Left colon (tissue), 2 donors: ENCODE measurements at regions of chr4 and their contacts with region 1.

Region 1: DNA sequence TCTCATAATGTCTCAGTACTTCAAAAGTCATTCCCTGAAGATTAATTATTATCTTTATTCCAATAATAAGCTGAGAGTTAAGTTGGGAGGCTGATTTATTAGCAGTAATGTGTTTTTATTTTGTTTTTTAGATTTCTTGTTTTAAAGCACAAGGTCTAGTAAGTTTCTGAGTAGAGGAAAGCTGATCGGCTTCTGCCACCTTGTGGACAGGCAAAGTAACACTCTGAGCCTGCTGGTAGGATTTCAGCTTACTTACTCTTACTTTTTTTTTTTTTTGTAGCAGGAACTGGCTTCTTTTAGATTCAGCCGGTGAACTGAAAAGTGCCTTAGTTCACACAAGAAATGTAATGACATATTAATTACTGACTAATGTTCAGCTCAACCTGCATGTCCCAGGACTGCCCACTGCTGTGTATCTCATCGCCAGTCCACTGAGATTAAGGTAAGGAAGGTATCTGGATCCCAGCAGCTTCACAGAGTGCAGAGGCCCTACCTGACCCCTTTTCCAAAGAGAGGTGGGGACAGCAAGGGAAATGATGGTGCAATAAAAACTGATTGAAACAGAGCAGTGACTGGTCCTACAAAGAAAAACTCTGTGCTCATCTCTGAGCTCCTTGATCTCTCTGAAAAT is 126.5 kb downstream of the ADGRA3 start:
- DNase-seq: peak; percentile 27 to 32
- ATAC-seq: peak; percentile 80

Region 2: GRCh38 chr4:21790438-21791029 is 598.8 kb before region 1 on chr4:
- intact Hi-C with region 1: loop called in 1 of 2 experiments (anchors 5 kb)
- DNase-seq: no peak
- ATAC-seq: peak; percentile 34

Region 3: GRCh38 chr4:22911285-22911684 is 521.9 kb after region 1 on chr4:
- intact Hi-C with region 1: no loop called
- DNase-seq: no peak
- ATAC-seq: no peak